BJ (cell line): ENCODE measurements at regions of chr16 and their contacts with region 1.

Region 1: GRCh38 chr16:67672739-67673662 is 6.4 kb downstream of the C16orf86 start:
- DNase-seq: no peak
- H3K4me3 ChIP-seq: no peak overlapping the region
- H3K27me3 ChIP-seq: no peaks in the 10 kb centered on the region
- CTCF ChIP-seq: peak; percentile 89

Region 2: GRCh38 chr16:67579686-67580085 is 93.3 kb before region 1 on chr16:
- CTCF ChIA-PET with region 1: no interaction called
- POLR2A ChIA-PET with region 1: no interaction called
- DNase-seq: no peak
- H3K4me3 ChIP-seq: no peak overlapping the region
- H3K27me3 ChIP-seq: no peaks in the 10 kb centered on the region
- CTCF ChIP-seq: no peak

Region 3: GRCh38 chr16:67683767-67684385 is 10.9 kb after region 1 on chr16:
- CTCF ChIA-PET with region 1: interaction called, 33 read pairs
- POLR2A ChIA-PET with region 1: no interaction called
- DNase-seq: no peak
- H3K4me3 ChIP-seq: no peak overlapping the region
- H3K27me3 ChIP-seq: no peaks in the 10 kb centered on the region
- CTCF ChIP-seq: no peak

Region 4: DNA sequence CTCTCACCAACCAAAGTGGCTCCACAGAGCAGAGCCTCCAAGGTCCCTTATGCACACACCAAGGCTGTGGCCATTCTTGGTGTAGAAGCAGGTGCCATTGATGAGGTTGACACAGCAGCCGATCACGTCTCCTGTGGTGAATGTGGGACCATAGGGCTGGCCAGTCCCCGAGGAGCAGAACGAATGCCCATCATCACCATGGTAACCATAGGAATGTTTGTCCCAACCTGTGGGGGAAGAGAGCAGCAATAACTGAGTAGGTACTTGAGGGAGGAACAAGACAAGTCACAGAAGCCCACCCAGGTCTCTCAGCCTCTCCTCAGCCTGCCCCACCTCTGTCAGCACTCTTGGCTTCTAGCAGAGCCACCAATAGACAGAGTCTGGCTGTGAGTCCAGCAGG is 71.2 kb after region 1 on chr16:
- CTCF ChIA-PET with region 1: no interaction called
- POLR2A ChIA-PET with region 1: no interaction called
- DNase-seq: no peak
- H3K4me3 ChIP-seq: no peak overlapping the region
- H3K27me3 ChIP-seq: no peaks in the 10 kb centered on the region
- CTCF ChIP-seq: no peak

Region 5: DNA sequence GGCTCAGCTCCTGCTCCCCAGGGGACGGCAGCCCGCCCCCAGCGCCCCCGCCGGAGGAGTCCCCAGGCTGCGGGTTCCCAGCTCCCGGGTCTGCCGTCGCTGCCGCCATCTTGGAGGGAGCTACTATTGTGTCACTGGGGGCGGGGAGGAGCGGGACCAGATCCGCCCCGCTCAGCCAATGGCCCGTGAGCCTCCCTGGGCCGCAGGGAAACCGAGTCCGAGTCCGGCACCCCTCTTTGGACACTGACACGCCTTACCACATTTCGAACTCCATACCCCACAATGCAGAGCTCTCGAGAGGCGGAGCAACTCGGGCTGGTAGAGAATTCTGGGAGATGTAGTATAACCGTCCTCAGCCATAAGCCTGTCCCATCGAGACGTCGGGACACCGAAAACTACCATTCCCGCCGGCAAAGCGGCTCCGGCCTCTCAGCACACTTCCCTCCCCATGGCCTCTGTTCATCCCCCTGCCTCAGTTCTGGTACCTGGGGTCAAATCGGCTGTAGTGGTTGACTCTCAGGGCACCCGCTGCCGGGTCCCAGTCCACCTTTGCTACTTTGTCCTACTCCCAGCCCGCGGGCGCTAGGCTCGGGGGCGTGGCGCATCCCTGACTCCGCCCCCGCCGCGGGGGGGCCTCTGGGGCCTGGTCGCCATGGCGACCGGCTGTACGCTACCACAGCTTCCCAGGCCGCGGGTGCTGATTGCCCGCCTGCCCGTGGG is 133.6 kb after region 1 on chr16 and contains the starts of genes RANBP10 and TSNAXIP1:
- CTCF ChIA-PET with region 1: interaction called, 11 read pairs
- POLR2A ChIA-PET with region 1: no interaction called
- DNase-seq: peak; percentile 99
- H3K4me3 ChIP-seq: peak within 1 kb of the TSS; percentile 84
- H3K27me3 ChIP-seq: no peaks in the 10 kb centered on the region
- CTCF ChIP-seq: no peak
- polyA plus RNA-seq, gene RANBP10: 11.5 and 17.6 TPM in 2 replicates
- polyA plus RNA-seq, gene TSNAXIP1: 0.96 and 1.6 TPM in 2 replicates

Region 6: GRCh38 chr16:67865316-67865715 is 192.3 kb after region 1 on chr16:
- CTCF ChIA-PET with region 1: interaction called, 16 read pairs
- POLR2A ChIA-PET with region 1: no interaction called
- DNase-seq: no peak
- H3K4me3 ChIP-seq: no peak overlapping the region
- H3K27me3 ChIP-seq: no peaks in the 10 kb centered on the region
- CTCF ChIP-seq: peak; percentile 46

Region 7: GRCh38 chr16:67928561-67929364 is 255.8 kb after region 1 on chr16:
- CTCF ChIA-PET with region 1: interaction called, 25 read pairs
- POLR2A ChIA-PET with region 1: no interaction called
- DNase-seq: no peak
- H3K4me3 ChIP-seq: no peak overlapping the region
- H3K27me3 ChIP-seq: no peaks in the 10 kb centered on the region
- CTCF ChIP-seq: peak; percentile 93

Region 8: GRCh38 chr16:67935402-67936123 is 262.6 kb after region 1 on chr16:
- CTCF ChIA-PET with region 1: interaction called, 10 read pairs
- POLR2A ChIA-PET with region 1: no interaction called
- DNase-seq: peak; percentile 59
- H3K4me3 ChIP-seq: peak overlapping the region; percentile 84
- H3K27me3 ChIP-seq: no peaks in the 10 kb centered on the region
- CTCF ChIP-seq: no peak